CD4-positive, alpha-beta memory T cell (primary cell): ENCODE measurements at regions of chr16 and their contacts with region 1.

Region 1: DNA sequence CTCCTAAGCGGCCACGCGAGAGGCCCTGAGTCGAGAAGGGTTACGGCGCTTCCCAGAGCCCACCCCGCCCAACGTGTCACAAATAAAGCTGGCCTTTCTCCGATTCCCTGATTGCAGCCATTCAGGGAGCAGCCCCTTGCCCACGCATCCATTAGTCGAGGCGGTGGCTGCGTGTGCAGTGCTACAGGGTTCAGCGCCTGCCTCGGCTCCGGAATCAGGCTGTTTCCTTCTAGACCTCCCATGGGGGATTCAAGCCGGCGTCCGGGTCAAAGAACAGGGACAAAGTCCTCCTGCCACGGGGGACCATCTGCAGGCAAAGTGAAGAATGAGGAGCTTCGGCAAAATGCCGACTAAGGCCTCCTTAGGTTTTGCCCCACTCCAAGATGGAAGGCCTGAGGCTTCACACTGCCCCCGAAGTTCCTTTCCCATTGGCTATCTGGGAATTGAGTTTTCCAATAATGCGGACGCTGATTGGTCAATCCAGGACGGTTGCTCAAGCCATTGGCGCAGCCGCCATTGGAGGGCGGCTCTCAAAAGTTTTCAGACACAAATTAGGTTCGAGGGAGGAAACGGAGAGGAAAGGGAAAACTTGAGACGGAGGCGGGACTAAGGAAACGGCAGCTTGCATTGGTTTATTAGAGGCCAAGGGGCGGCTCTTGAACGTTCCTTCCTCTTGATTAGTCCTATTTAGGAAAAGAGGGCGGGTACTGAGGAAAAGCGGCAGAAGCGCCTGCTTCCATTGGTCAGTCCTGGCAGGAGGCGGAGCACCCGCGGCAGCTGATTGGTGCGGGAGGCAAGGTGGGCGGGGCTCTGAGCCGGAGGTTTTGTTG is 430 bp upstream of the KATNB1 start:
- DNase-seq: peak; percentile 97 to 99 (median 99)
- H3K4me3 ChIP-seq: peak overlapping the region; percentile 91 to 95
- H3K4me3 Mint-ChIP-seq: peak overlapping the region; percentile 96 to 100 (median 98)
- H3K27ac ChIP-seq: peak overlapping the region; percentile 76
- H3K27ac Mint-ChIP-seq: peak overlapping the region; percentile 94 to 99 (median 96)
- H3K4me1 ChIP-seq: peaks cover 17% of the 10 kb centered on the region
- H3K4me1 Mint-ChIP-seq: peaks cover 14 to 37% (median 29%) of the 10 kb centered on the region in 4 donors
- H3K27me3 ChIP-seq: no peaks in the 10 kb centered on the region
- H3K27me3 Mint-ChIP-seq: no peaks in the 10 kb centered on the region

Region 2: GRCh38 chr16:57447186-57447962 is 287.8 kb before region 1 on chr16 and contains the starts of genes CIAPIN1 and COQ9:
- CTCF ChIA-PET with region 1: no interaction called
- POLR2A ChIA-PET with region 1: interaction called, 9 read pairs
- intact Hi-C with region 1: loop called (anchors 1 kb)
- DNase-seq: peak; percentile 88 to 94 (median 91)
- H3K4me3 ChIP-seq: peak within 1 kb of the TSS; percentile 66 to 78
- H3K4me3 Mint-ChIP-seq: peak within 1 kb of the TSS; percentile 90 to 94 (median 92)
- H3K27ac ChIP-seq: peak within 1 kb of the TSS; percentile 86
- H3K27ac Mint-ChIP-seq: peak within 1 kb of the TSS; percentile 79 to 94 (median 91)
- H3K4me1 ChIP-seq: peaks cover 23% of the 10 kb centered on the region
- H3K4me1 Mint-ChIP-seq: peaks cover 15 to 38% (median 26%) of the 10 kb centered on the region in 4 donors
- H3K27me3 ChIP-seq: no peaks in the 10 kb centered on the region
- H3K27me3 Mint-ChIP-seq: no peaks in the 10 kb centered on the region
- total RNA-seq, gene CIAPIN1: 28.1 to 28.5 TPM
- total RNA-seq, gene COQ9: 35.3 to 37.7 TPM

Region 3: GRCh38 chr16:57591086-57591869 is 143.9 kb before region 1 on chr16:
- CTCF ChIA-PET with region 1: interaction called, 3 read pairs
- POLR2A ChIA-PET with region 1: interaction called, 9 read pairs
- intact Hi-C with region 1: loop called (anchors 5 kb)
- DNase-seq: peak; percentile 49 to 60 (median 59)
- H3K4me3 ChIP-seq: no peak overlapping the region
- H3K4me3 Mint-ChIP-seq: peak overlapping the region in 6 of 8 donors; percentile 23 to 89 (median 56)
- H3K27ac ChIP-seq: no peak overlapping the region
- H3K27ac Mint-ChIP-seq: peak overlapping the region; percentile 8 to 91 (median 68)
- H3K4me1 ChIP-seq: peaks cover 35% of the 10 kb centered on the region
- H3K4me1 Mint-ChIP-seq: peaks cover 28 to 49% (median 35%) of the 10 kb centered on the region in 4 donors
- H3K27me3 ChIP-seq: no peaks in the 10 kb centered on the region
- H3K27me3 Mint-ChIP-seq: no peaks in the 10 kb centered on the region

Region 4: DNA sequence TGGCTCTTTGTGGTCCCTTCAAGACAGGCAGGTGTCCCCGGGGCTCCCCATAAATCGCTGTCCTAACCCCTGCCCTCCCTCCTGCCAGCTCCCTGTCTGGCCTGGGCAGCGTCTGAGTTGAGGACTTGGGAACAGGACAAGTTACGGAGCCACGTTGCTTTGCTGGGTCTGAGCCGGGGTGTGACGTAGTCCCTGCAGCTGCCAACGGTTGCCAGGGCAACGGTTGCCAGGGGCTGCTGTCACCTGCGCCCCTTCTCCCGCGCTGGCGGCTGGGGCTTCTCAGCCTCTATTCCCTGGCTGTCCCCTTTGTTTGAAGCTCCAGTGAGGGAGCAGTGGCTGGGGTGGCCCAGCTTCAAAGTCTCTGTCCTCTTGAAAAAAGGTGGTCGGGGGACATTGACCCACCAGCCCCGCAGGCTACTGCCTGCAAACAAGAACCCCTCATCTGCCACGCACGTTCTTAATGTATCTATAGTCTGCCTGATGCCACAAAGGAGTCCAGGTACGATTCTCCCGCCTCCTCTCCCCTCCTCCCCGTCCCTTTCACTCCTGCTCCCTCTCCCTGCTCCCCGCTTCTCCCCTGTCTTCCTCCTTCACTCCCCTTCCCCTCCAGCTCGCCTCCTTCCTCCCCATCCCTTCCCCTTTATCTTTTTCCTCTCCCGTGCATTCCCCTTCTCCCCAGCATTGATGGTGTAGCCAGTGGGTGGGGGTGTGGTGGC is 95.8 kb before region 1 on chr16:
- CTCF ChIA-PET with region 1: no interaction called
- POLR2A ChIA-PET with region 1: no interaction called
- intact Hi-C with region 1: no loop called
- DNase-seq: peak in 3 of 5 donors; percentile 11 to 19 (median 19)
- H3K4me3 ChIP-seq: no peak overlapping the region
- H3K4me3 Mint-ChIP-seq: no peak overlapping the region
- H3K27ac ChIP-seq: no peak overlapping the region
- H3K27ac Mint-ChIP-seq: peak overlapping the region in 2 of 7 donors; percentile 27 to 30
- H3K4me1 ChIP-seq: no peaks in the 10 kb centered on the region
- H3K4me1 Mint-ChIP-seq: peaks cover 0 to 1% (median 0%) of the 10 kb centered on the region in 4 donors
- H3K27me3 ChIP-seq: no peaks in the 10 kb centered on the region
- H3K27me3 Mint-ChIP-seq: peaks cover 3 to 11% of the 10 kb centered on the region in 2 donors

Region 5: GRCh38 chr16:57834936-57835335 is 99.8 kb after region 1 on chr16:
- CTCF ChIA-PET with region 1: no interaction called
- POLR2A ChIA-PET with region 1: no interaction called
- intact Hi-C with region 1: no loop called
- DNase-seq: no peak
- H3K4me3 ChIP-seq: no peak overlapping the region
- H3K4me3 Mint-ChIP-seq: no peak overlapping the region
- H3K27ac ChIP-seq: no peak overlapping the region
- H3K27ac Mint-ChIP-seq: no peak overlapping the region
- H3K4me1 ChIP-seq: no peaks in the 10 kb centered on the region
- H3K4me1 Mint-ChIP-seq: no peaks in the 10 kb centered on the region
- H3K27me3 ChIP-seq: peaks cover 4% of the 10 kb centered on the region
- H3K27me3 Mint-ChIP-seq: peaks cover 1 to 5% of the 10 kb centered on the region in 2 donors

Region 6: DNA sequence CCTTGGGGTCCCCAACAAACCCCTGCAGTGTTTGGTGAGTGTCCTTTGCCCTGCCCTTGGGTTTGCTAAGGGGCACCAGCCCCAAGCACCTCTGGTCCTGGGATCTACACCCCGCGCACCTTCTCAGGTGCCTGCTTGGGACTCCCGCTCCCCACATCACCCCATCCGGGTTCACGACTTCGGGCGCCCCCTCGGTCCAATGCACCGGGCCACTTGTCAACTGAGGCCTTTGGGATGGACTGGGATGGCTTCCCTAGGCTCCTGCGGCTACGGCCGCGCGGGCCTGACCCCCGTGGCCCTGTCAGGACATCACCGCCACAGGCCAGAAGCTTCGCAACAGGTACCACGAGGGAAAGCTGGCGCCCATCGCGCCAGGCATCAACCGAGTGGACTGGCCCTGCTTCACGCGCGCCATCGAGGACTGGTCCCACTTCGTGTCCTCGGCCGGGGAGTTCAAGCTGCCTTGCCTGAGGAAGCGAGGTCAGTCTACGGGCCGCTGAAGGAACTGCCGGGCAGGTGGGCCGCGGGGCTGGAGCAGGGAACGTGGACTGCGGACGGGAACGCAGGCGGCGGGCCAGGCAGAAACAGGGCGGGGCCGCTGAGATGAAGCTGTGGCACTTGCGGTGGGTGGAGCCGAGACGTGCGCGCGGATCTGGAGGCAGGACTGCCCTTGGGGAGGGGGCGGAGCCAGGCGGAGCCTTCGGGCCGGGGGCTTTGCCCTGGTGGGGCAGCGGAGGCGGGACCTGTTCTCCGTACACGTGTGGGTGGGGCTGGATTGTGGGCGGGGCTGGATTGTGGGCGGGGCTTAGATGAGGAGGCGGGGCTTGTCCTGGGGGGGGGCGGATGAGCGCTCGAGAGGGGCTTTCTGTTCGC is 249.4 kb after region 1 on chr16:
- CTCF ChIA-PET with region 1: no interaction called
- POLR2A ChIA-PET with region 1: interaction called, 4 read pairs
- intact Hi-C with region 1: loop called (anchors 1 kb)
- DNase-seq: peak; percentile 84 to 95 (median 92)
- H3K4me3 ChIP-seq: peak overlapping the region; percentile 73 to 76
- H3K4me3 Mint-ChIP-seq: peak overlapping the region; percentile 80 to 94 (median 90)
- H3K27ac ChIP-seq: peak overlapping the region; percentile 57
- H3K27ac Mint-ChIP-seq: peak overlapping the region; percentile 75 to 94 (median 85)
- H3K4me1 ChIP-seq: peaks cover 15% of the 10 kb centered on the region
- H3K4me1 Mint-ChIP-seq: peaks cover 4 to 26% (median 16%) of the 10 kb centered on the region in 4 donors
- H3K27me3 ChIP-seq: no peaks in the 10 kb centered on the region
- H3K27me3 Mint-ChIP-seq: no peaks in the 10 kb centered on the region

Region 7: GRCh38 chr16:58198022-58198683 is 463.0 kb after region 1 on chr16 and contains the start of gene CSNK2A2:
- CTCF ChIA-PET with region 1: no interaction called
- POLR2A ChIA-PET with region 1: no interaction called
- intact Hi-C with region 1: loop called (anchors 5 kb)
- DNase-seq: peak; percentile 59 to 67 (median 64)
- H3K4me3 ChIP-seq: peak within 1 kb of the TSS; percentile 40 to 64
- H3K4me3 Mint-ChIP-seq: peak within 1 kb of the TSS; percentile 82 to 93 (median 88)
- H3K27ac ChIP-seq: peak within 1 kb of the TSS; percentile 30
- H3K27ac Mint-ChIP-seq: peak within 1 kb of the TSS; percentile 79 to 88 (median 87)
- H3K4me1 ChIP-seq: peaks cover 43% of the 10 kb centered on the region
- H3K4me1 Mint-ChIP-seq: peaks cover 28 to 49% (median 39%) of the 10 kb centered on the region in 4 donors
- H3K27me3 ChIP-seq: no peaks in the 10 kb centered on the region
- H3K27me3 Mint-ChIP-seq: peaks cover 6 to 11% of the 10 kb centered on the region in 2 donors
- total RNA-seq, gene CSNK2A2: 63.5 to 63.6 TPM